HEK293 (cell line): ENCODE measurements at regions of chr20 and their contacts with region 1.

Region 1: GRCh38 chr20:16761305-16761829 is 13.2 kb downstream of the OTOR start:
- H3K4me3 ChIP-seq: no peak overlapping the region
- H3K27ac ChIP-seq: no peak overlapping the region
- H3K4me1 ChIP-seq: no peaks in the 10 kb centered on the region
- CTCF ChIP-seq: peak; percentile 45; the same call in 1 of the 2 replicates

Region 2: DNA sequence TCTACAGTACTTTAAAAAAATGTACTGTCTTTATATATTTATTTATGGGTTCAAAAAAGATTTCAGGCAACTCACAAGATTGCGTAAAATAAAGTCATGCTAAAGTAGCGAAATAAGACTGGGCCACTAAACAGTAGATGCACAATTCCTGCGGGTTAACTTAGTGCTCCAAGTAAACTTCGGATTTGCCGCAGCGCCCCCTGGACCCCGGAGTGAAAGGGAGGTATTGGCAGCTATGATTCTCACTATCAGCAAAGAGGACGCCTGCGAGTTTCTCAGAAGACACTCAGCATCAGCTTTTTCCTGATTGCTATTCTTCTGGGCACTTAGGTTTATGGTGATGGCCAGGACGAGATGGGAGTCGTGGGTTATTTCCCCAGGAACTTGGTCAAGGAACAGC is 11.8 kb before region 1 on chr20:
- CTCF ChIA-PET with region 1: interaction called, 30 read pairs
- POLR2A ChIA-PET with region 1: no interaction called
- H3K4me3 ChIP-seq: no peak overlapping the region
- H3K27ac ChIP-seq: no peak overlapping the region
- H3K4me1 ChIP-seq: no peaks in the 10 kb centered on the region
- CTCF ChIP-seq: no peak